Activated CD4-positive, alpha-beta memory T cell treated with anti-CD3 and anti-CD28 coated beads, Interleukin-2, amount 10 ng/mL, durations not matched to agents 7 days and 5 days (primary cell): ENCODE measurements at regions of chr1 and their contacts with region 1.

Region 1: GRCh38 chr1:245045087-245045881 is 109.5 kb upstream of the KIF26B start:
- DNase-seq: no peak
- H3K4me3 Mint-ChIP-seq: no peak overlapping the region
- H3K27ac Mint-ChIP-seq: no peak overlapping the region
- H3K4me1 Mint-ChIP-seq: peaks cover 6% of the 10 kb centered on the region
- H3K27me3 Mint-ChIP-seq: peaks cover 3% of the 10 kb centered on the region

Region 2: GRCh38 chr1:244796718-244797406 is 248.4 kb before region 1 on chr1:
- CTCF ChIA-PET with region 1: interaction called, 55 read pairs
- POLR2A ChIA-PET with region 1: interaction called, 5 read pairs
- DNase-seq: peak; percentile 47
- H3K4me3 Mint-ChIP-seq: no peak overlapping the region
- H3K27ac Mint-ChIP-seq: no peak overlapping the region
- H3K4me1 Mint-ChIP-seq: peaks cover 5% of the 10 kb centered on the region
- H3K27me3 Mint-ChIP-seq: peaks cover 2% of the 10 kb centered on the region

Region 3: DNA sequence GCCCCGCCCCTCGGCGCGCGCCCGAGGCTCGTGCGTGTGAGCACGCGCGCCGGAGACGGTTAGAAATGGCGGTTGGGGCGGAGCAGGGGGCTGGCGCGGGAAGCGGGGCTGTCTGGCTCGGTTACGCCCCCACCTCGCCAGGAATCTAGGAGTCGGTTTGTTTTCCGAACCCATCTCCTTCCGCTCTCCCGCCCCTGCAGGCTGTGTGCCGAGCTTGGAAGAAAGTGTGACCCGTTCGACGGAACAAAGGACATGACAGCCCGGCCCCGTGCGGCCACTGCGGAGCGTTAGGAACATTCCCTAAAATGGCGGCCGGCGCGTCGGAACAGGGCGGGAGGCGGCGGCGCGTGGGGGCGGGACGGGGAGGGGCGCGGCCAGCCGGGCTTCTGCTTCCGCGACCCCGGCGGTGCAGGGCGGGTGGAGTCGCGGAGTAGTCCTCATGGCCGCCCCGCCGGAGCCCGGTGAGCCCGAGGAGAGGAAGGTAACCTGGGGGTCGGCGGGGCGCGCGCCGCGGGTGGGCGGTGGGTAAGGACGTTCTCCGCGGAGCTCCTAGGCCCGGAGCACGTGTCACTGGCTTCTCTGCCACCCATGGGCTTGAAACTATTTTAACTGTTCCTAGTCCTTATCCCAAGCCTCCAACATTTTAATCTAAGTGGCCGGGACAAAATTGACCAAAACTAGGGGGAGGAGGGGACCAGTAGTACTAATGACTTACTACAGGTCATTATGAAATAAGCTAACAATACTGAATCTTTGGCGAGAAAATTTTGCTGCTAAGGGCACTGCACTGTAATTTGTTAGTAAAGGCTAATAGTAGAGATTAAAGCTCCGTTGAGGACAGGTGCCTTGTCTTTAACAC is 209.8 kb before region 1 on chr1 and contains the start of gene COX20:
- CTCF ChIA-PET with region 1: interaction called, 16 read pairs
- POLR2A ChIA-PET with region 1: interaction called, 4 read pairs
- DNase-seq: peak; percentile 88
- H3K4me3 Mint-ChIP-seq: peak within 1 kb of the TSS; percentile 83
- H3K27ac Mint-ChIP-seq: peak within 1 kb of the TSS; percentile 99
- H3K4me1 Mint-ChIP-seq: peaks cover 50% of the 10 kb centered on the region
- H3K27me3 Mint-ChIP-seq: no peaks in the 10 kb centered on the region
- total RNA-seq, gene COX20: 22.2 to 22.9 TPM

Region 4: GRCh38 chr1:244864253-244865027 is 180.8 kb before region 1 on chr1 and contains the start of gene HNRNPU:
- CTCF ChIA-PET with region 1: interaction called, 43 read pairs
- POLR2A ChIA-PET with region 1: interaction called, 12 read pairs
- DNase-seq: peak; percentile 96
- H3K4me3 Mint-ChIP-seq: peak within 1 kb of the TSS; percentile 81
- H3K27ac Mint-ChIP-seq: peak within 1 kb of the TSS; percentile 94
- H3K4me1 Mint-ChIP-seq: peaks cover 42% of the 10 kb centered on the region
- H3K27me3 Mint-ChIP-seq: no peaks in the 10 kb centered on the region
- total RNA-seq, gene HNRNPU: 364 to 371 TPM

Region 5: DNA sequence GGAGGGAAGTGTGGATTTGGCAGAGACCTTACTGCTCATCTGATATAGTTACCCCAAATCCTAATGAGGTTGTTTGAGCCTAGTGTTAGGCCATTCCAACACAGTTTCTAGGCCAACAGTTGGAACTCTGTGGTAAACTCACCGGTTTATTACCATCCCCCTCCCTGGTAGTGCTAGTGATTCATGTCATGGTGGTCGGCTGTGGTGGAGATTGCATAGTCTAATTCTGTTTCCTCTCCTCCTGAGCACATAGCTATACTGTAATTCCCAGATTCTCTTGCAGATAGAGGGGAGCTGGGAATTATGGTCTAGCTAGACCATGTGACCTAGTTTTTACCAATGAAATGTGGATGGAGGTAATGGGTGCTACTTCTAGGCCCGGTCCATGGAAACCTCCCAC is 14.2 kb before region 1 on chr1:
- CTCF ChIA-PET with region 1: interaction called, 26 read pairs
- POLR2A ChIA-PET with region 1: no interaction called
- DNase-seq: no peak
- H3K4me3 Mint-ChIP-seq: no peak overlapping the region
- H3K27ac Mint-ChIP-seq: no peak overlapping the region
- H3K4me1 Mint-ChIP-seq: peaks cover 14% of the 10 kb centered on the region
- H3K27me3 Mint-ChIP-seq: no peaks in the 10 kb centered on the region

Region 6: DNA sequence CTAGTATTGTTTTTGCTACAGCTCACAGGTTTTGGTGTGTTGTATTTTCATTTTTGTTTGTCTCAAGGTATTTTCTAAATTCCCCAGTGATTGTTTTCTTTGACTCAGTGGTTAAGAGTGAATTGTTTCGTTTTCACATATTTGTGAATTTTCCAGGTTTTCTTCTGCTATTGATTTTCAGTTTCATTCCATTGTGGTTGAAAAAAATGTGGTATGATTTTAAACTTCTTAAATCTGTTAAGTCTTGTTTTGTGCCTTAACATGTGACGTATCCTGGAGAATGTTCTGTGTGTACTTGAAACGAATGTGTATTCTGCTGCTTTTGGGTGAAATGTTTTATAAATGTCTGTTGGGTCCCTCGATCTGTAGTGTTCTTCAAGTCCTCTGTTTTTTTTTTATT is 227.4 kb after region 1 on chr1:
- CTCF ChIA-PET with region 1: no interaction called
- POLR2A ChIA-PET with region 1: no interaction called
- DNase-seq: no peak
- H3K4me3 Mint-ChIP-seq: no peak overlapping the region
- H3K27ac Mint-ChIP-seq: no peak overlapping the region
- H3K4me1 Mint-ChIP-seq: no peaks in the 10 kb centered on the region
- H3K27me3 Mint-ChIP-seq: peaks cover 4% of the 10 kb centered on the region

Region 7: GRCh38 chr1:245465666-245466065 is 420.4 kb after region 1 on chr1:
- CTCF ChIA-PET with region 1: no interaction called
- POLR2A ChIA-PET with region 1: no interaction called
- DNase-seq: no peak
- H3K4me3 Mint-ChIP-seq: no peak overlapping the region
- H3K27ac Mint-ChIP-seq: no peak overlapping the region
- H3K4me1 Mint-ChIP-seq: no peaks in the 10 kb centered on the region
- H3K27me3 Mint-ChIP-seq: no peaks in the 10 kb centered on the region